Head of caudate nucleus (tissue), 42 donors: ENCODE measurements at regions of chr14 and their contacts with region 1.

Region 1: GRCh38 chr14:93892923-93893558 is 34.1 kb upstream of the FAM181A start:
- DNase-seq: peak; percentile 48 to 93 (median 81)

Region 2: DNA sequence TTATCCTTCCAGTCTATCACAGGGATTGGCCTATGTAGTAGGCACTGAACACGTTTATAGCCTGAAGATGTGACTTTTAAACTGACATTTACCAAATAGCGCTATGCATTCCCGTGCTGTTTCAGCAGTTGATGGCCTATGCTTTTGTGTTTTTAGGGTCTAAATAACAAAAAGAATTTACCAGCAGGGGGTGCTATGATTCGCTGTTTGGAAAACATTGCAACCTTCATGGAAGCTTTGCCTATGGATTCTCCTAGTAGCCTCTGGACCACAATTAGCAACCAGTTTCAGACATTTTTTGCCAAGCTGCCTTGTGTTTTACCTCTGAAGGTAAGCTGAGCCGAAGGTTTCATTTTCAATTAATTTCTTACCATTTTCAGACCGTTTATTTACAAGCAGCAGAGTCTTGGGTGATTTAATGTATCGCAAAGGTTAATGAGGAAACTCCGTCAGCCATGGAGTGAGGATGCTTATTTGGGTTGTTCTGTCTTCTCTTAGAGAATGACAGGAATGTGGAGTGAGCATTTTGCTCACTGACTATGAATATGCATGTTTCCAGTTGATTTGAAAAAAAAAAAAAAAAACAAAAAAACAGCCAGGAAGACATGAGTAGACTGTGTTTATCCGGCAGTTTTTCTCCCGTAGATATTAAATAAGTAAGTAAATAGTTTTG is 237.8 kb before region 1 on chr14:
- intact Hi-C with region 1: loop called (anchors 5 kb)
- DNase-seq: peak in 27 of 42 donors; percentile 10 to 86 (median 57)

Region 3: DNA sequence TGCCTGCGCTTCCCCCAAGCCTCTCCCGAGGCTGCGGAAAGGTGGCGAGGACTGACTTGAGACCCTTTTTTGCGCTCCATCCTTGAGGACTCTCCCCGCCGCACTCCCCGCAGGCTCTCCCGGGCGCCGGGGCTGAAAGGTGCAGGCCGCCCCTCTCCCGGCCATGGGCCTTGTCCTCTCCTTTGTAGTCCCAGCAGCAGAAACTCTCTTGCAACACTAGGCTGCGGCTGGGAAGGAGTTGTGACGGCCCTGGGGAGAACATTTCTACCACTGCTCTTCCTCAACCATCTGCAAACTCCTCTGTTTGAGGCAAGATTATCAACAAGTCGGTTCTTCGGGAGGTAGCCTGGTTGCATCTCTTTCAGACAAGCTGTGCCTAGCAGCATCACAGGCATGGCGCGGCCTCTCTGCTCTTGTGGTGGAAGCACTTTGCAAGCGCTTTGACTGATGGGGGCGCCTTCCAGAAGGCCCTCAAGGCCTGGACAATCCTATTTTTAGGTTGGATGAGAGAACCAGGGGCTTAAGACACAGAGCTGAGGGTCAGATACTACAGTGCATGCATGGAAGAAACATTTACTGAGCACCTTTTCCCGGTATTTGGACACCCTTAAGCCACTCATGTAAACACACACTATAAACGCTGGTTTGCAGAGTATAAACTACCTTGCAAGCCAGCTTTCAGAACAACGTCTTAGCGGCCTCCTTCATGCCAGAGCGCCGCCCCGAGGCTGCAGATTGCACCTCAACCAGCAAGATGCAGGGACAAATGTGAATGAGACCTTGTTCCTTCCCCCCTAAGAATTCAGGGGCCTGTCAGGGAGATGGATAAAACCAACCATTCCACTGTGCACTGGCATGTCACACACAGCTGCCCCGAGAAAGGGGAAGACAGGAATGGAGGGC is 103.6 kb before region 1 on chr14:
- intact Hi-C with region 1: loop called (anchors 10 kb)
- DNase-seq: peak in 3 of 42 donors; percentile 15 to 43 (median 21)